Right cardiac atrium (tissue), 5 donors: ENCODE measurements at regions of chr3 and their contacts with region 1.

Region 1: GRCh38 chr3:62159709-62160092 is 213.6 kb downstream of the FEZF2 start:
- DNase-seq: peak; percentile 85 to 91 (median 86)
- ATAC-seq: peak; percentile 97
- H3K4me3 ChIP-seq: no peak overlapping the region
- H3K27ac ChIP-seq: peak overlapping the region; percentile 93
- H3K4me1 ChIP-seq: peaks cover 17% of the 10 kb centered on the region
- H3K27me3 ChIP-seq: no peaks in the 10 kb centered on the region

Region 2: GRCh38 chr3:62097121-62097520 is 62.6 kb before region 1 on chr3:
- intact Hi-C with region 1: loop called in 1 of 4 experiments (anchors 10 kb)
- DNase-seq: no peak
- ATAC-seq: peak; percentile 85 to 89
- H3K4me3 ChIP-seq: no peak overlapping the region
- H3K27ac ChIP-seq: peak overlapping the region; percentile 98
- H3K4me1 ChIP-seq: peaks cover 13% of the 10 kb centered on the region
- H3K27me3 ChIP-seq: no peaks in the 10 kb centered on the region

Region 3: GRCh38 chr3:62128051-62128450 is 31.6 kb before region 1 on chr3:
- intact Hi-C with region 1: no loop called
- DNase-seq: peak in 1 of 3 donors; percentile 28
- ATAC-seq: peak in 1 of 2 donors; percentile 45
- H3K4me3 ChIP-seq: no peak overlapping the region
- H3K27ac ChIP-seq: no peak overlapping the region
- H3K4me1 ChIP-seq: no peaks in the 10 kb centered on the region
- H3K27me3 ChIP-seq: no peaks in the 10 kb centered on the region